ENCODE measurements at regions of chr3 and their contacts with region 1.

Region 1: GRCh38 chr3:72818092-72818773 is 30.0 kb downstream of the SHQ1 start:
- DNase-seq: no peak
- ATAC-seq: no peak
- H3K4me3 Mint-ChIP-seq: no peak overlapping the region
- H3K27ac Mint-ChIP-seq: no peak overlapping the region
- H3K4me1 Mint-ChIP-seq: peaks cover 23% of the 10 kb centered on the region
- H3K27me3 Mint-ChIP-seq: no peaks in the 10 kb centered on the region
- CTCF ChIP-seq: no peak

Region 2: GRCh38 chr3:71710906-71711494 is 1107.2 kb before region 1 on chr3:
- CTCF ChIA-PET with region 1: interaction called, 30 read pairs
- POLR2A ChIA-PET with region 1: no interaction called
- intact Hi-C with region 1: loop called (anchors 1 kb)
- DNase-seq: no peak
- ATAC-seq: peak; percentile 52
- H3K4me3 Mint-ChIP-seq: no peak overlapping the region
- H3K27ac Mint-ChIP-seq: no peak overlapping the region
- H3K4me1 Mint-ChIP-seq: no peaks in the 10 kb centered on the region
- H3K27me3 Mint-ChIP-seq: no peaks in the 10 kb centered on the region
- CTCF ChIP-seq: no peak

Region 3: GRCh38 chr3:71926262-71926600 is 892.0 kb before region 1 on chr3:
- CTCF ChIA-PET with region 1: interaction called, 10 read pairs
- POLR2A ChIA-PET with region 1: no interaction called
- intact Hi-C with region 1: loop called (anchors 1 kb)
- DNase-seq: no peak
- ATAC-seq: no peak
- H3K4me3 Mint-ChIP-seq: no peak overlapping the region
- H3K27ac Mint-ChIP-seq: no peak overlapping the region
- H3K4me1 Mint-ChIP-seq: peaks cover 11% of the 10 kb centered on the region
- H3K27me3 Mint-ChIP-seq: peaks cover 32% of the 10 kb centered on the region
- CTCF ChIP-seq: no peak

Region 4: DNA sequence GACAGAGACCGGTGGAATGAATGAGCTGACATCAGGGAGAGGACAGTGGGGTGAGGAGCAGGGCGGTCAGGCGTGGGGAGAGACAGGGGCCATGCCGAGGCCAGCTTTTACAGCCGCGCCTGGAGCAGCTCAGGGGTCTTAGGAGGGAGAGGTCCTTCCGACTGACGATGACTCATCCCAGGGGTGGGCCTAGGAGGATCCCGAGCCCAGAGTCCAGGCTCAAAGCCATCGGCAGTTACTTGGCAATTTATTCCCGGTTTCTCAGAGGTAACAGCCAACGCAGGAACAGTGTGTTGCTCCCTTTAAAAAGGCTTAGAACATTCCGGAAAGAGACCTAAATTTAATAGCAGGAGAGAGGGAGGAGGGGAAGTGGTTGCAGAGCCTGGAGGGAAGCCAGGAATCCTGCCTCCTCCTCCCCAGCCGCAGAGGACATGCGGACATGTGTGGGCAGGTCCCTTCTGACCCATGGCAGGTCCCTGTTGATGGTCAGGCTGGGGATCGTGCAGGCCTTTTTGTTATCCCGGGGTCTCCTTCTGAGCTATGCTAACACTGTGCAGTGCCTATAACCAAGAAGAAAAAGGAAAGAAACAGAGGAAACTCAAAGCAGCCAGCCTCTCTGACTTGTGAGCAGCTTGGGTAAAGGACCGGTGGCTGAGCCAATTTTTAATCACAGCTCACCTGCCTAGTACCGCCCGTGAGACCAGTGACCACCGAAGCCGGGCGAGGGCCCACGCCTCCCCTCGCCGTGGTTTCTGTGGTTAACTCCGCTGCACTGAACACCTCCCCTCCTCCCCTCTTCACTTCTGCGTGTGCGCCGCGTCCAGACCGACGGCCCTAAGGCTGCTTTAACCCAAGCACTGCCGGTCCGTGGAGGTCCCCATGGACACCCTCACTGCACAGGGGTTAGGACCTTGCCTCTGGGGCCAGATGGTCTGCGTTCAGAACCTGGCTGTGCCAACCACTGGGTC is 640.9 kb before region 1 on chr3:
- CTCF ChIA-PET with region 1: no interaction called
- POLR2A ChIA-PET with region 1: no interaction called
- intact Hi-C with region 1: loop called (anchors 5 kb)
- DNase-seq: peak; percentile 35
- ATAC-seq: peak; percentile 20
- H3K4me3 Mint-ChIP-seq: peak overlapping the region; percentile 79
- H3K27ac Mint-ChIP-seq: peak overlapping the region; percentile 75
- H3K4me1 Mint-ChIP-seq: peaks cover 64% of the 10 kb centered on the region
- H3K27me3 Mint-ChIP-seq: peaks cover 2% of the 10 kb centered on the region
- CTCF ChIP-seq: no peak

Region 5: DNA sequence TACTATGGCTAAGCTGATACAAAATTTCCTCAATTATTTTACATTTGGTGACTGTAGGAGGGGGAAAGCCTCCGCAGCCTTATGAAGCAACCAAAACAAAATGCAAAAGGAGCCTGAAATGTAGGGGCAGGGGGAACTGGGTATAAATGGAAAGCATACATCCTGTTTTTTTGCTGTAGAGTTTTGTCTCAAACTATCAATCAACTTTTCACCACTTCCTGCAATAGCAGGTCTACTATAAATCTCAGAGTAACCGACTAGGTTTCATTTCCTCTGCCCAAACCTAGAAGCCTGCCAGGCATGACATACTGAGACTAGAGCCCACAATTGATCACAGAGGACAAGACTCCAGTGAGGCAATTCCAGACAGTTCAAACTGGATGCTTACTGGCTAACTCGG is 61.3 kb before region 1 on chr3:
- CTCF ChIA-PET with region 1: no interaction called
- POLR2A ChIA-PET with region 1: no interaction called
- intact Hi-C with region 1: loop called (anchors 5 kb)
- DNase-seq: no peak
- ATAC-seq: peak; percentile 99
- H3K4me3 Mint-ChIP-seq: peak overlapping the region; percentile 67
- H3K27ac Mint-ChIP-seq: no peak overlapping the region
- H3K4me1 Mint-ChIP-seq: peaks cover 32% of the 10 kb centered on the region
- H3K27me3 Mint-ChIP-seq: peaks cover 33% of the 10 kb centered on the region
- CTCF ChIP-seq: no peak